Naive thymus-derived CD4-positive, alpha-beta T cell (primary cell): ENCODE measurements at regions of chrX and their contacts with region 1.

Region 1: GRCh38 chrX:41084044-41084892 is 977 bp upstream of the USP9X start:
- DNase-seq: peak; percentile 89 to 100 (median 98)
- ATAC-seq: peak; percentile 81
- H3K4me3 ChIP-seq: peak overlapping the region; percentile 97
- H3K4me3 Mint-ChIP-seq: peak overlapping the region; percentile 86 to 98 (median 94)
- H3K27ac ChIP-seq: peak overlapping the region; percentile 99
- H3K27ac Mint-ChIP-seq: peak overlapping the region; percentile 96 to 100 (median 99)
- H3K4me1 ChIP-seq: peaks cover under 1 to 7% of the 10 kb centered on the region in 2 donors
- H3K4me1 Mint-ChIP-seq: peaks cover 7 to 40% (median 17%) of the 10 kb centered on the region in 7 donors
- H3K27me3 ChIP-seq: no peaks in the 10 kb centered on the region
- H3K27me3 Mint-ChIP-seq: no peaks in the 10 kb centered on the region

Region 2: GRCh38 chrX:40169193-40170101 is 914.8 kb before region 1 on chrX:
- CTCF ChIA-PET with region 1: no interaction called
- POLR2A ChIA-PET with region 1: no interaction called
- intact Hi-C with region 1: loop called in 1 of 2 experiments (anchors 10 kb)
- DNase-seq: peak in 8 of 9 donors; percentile 65 to 81 (median 74)
- ATAC-seq: peak; percentile 79
- H3K4me3 ChIP-seq: peak overlapping the region; percentile 51
- H3K4me3 Mint-ChIP-seq: peak overlapping the region; percentile 86 to 94 (median 90)
- H3K27ac ChIP-seq: peak overlapping the region; percentile 98
- H3K27ac Mint-ChIP-seq: peak overlapping the region; percentile 96 to 99 (median 98)
- H3K4me1 ChIP-seq: peaks cover 14 to 31% of the 10 kb centered on the region in 2 donors
- H3K4me1 Mint-ChIP-seq: peaks cover 17 to 64% (median 40%) of the 10 kb centered on the region in 7 donors
- H3K27me3 ChIP-seq: no peaks in the 10 kb centered on the region
- H3K27me3 Mint-ChIP-seq: no peaks in the 10 kb centered on the region

Region 3: GRCh38 chrX:40580537-40581335 is 503.5 kb before region 1 on chrX and contains the start of gene ATP6AP2:
- CTCF ChIA-PET with region 1: no interaction called
- POLR2A ChIA-PET with region 1: no interaction called
- intact Hi-C with region 1: loop called (anchors 2 to 10 kb)
- DNase-seq: peak; percentile 60 to 91 (median 88)
- ATAC-seq: peak; percentile 96
- H3K4me3 ChIP-seq: peak within 1 kb of the TSS; percentile 81
- H3K4me3 Mint-ChIP-seq: peak within 1 kb of the TSS; percentile 92 to 98 (median 94)
- H3K27ac ChIP-seq: peak within 1 kb of the TSS; percentile 90
- H3K27ac Mint-ChIP-seq: peak within 1 kb of the TSS; percentile 87 to 96 (median 95)
- H3K4me1 ChIP-seq: peaks cover 13 to 16% of the 10 kb centered on the region in 2 donors
- H3K4me1 Mint-ChIP-seq: peaks cover 21 to 38% (median 34%) of the 10 kb centered on the region in 7 donors
- H3K27me3 ChIP-seq: no peaks in the 10 kb centered on the region
- H3K27me3 Mint-ChIP-seq: no peaks in the 10 kb centered on the region
- total RNA-seq, gene ATP6AP2: 72.0 to 98.6 (median 82.5) TPM

Region 4: GRCh38 chrX:40735325-40736169 is 348.7 kb before region 1 on chrX and contains the start of gene MED14:
- CTCF ChIA-PET with region 1: no interaction called
- POLR2A ChIA-PET with region 1: interaction called, 15 read pairs
- intact Hi-C with region 1: loop called (anchors 1 kb)
- DNase-seq: peak; percentile 74 to 97 (median 96)
- ATAC-seq: peak; percentile 94
- H3K4me3 ChIP-seq: peak within 1 kb of the TSS; percentile 95
- H3K4me3 Mint-ChIP-seq: peak within 1 kb of the TSS; percentile 87 to 99 (median 95)
- H3K27ac ChIP-seq: peak within 1 kb of the TSS; percentile 93
- H3K27ac Mint-ChIP-seq: peak within 1 kb of the TSS; percentile 96 to 100 (median 98)
- H3K4me1 ChIP-seq: peaks cover 6 to 11% of the 10 kb centered on the region in 2 donors
- H3K4me1 Mint-ChIP-seq: peaks cover 9 to 71% (median 48%) of the 10 kb centered on the region in 7 donors
- H3K27me3 ChIP-seq: no peaks in the 10 kb centered on the region
- H3K27me3 Mint-ChIP-seq: no peaks in the 10 kb centered on the region
- total RNA-seq, gene MED14: 37.9 to 49.5 (median 44.3) TPM

Region 5: GRCh38 chrX:40933132-40933705 is 151.0 kb before region 1 on chrX:
- CTCF ChIA-PET with region 1: no interaction called
- POLR2A ChIA-PET with region 1: interaction called, 4 read pairs
- intact Hi-C with region 1: loop called in 1 of 2 experiments (anchors 1 kb)
- DNase-seq: peak in 7 of 9 donors; percentile 10 to 37 (median 27)
- ATAC-seq: peak; percentile 38
- H3K4me3 ChIP-seq: peak overlapping the region; percentile 51
- H3K4me3 Mint-ChIP-seq: peak overlapping the region; percentile 79 to 91 (median 88)
- H3K27ac ChIP-seq: peak overlapping the region; percentile 59
- H3K27ac Mint-ChIP-seq: peak overlapping the region; percentile 82 to 97 (median 94)
- H3K4me1 ChIP-seq: peaks cover 0 to 10% of the 10 kb centered on the region in 2 donors
- H3K4me1 Mint-ChIP-seq: peaks cover 9 to 34% (median 22%) of the 10 kb centered on the region in 7 donors
- H3K27me3 ChIP-seq: no peaks in the 10 kb centered on the region
- H3K27me3 Mint-ChIP-seq: no peaks in the 10 kb centered on the region

Region 6: GRCh38 chrX:40996886-40997530 is 87.3 kb before region 1 on chrX:
- CTCF ChIA-PET with region 1: no interaction called
- POLR2A ChIA-PET with region 1: interaction called, 4 read pairs
- intact Hi-C with region 1: loop called in 1 of 2 experiments (anchors 5 kb)
- DNase-seq: peak in 2 of 9 donors; percentile 7 to 11
- ATAC-seq: peak; percentile 90
- H3K4me3 ChIP-seq: no peak overlapping the region
- H3K4me3 Mint-ChIP-seq: peak overlapping the region in 6 of 10 donors; percentile 33 to 68 (median 47)
- H3K27ac ChIP-seq: no peak overlapping the region
- H3K27ac Mint-ChIP-seq: no peak overlapping the region
- H3K4me1 ChIP-seq: no peaks in the 10 kb centered on the region
- H3K4me1 Mint-ChIP-seq: peaks cover 0 to 5% (median 0%) of the 10 kb centered on the region in 7 donors
- H3K27me3 ChIP-seq: no peaks in the 10 kb centered on the region
- H3K27me3 Mint-ChIP-seq: no peaks in the 10 kb centered on the region

Region 7: DNA sequence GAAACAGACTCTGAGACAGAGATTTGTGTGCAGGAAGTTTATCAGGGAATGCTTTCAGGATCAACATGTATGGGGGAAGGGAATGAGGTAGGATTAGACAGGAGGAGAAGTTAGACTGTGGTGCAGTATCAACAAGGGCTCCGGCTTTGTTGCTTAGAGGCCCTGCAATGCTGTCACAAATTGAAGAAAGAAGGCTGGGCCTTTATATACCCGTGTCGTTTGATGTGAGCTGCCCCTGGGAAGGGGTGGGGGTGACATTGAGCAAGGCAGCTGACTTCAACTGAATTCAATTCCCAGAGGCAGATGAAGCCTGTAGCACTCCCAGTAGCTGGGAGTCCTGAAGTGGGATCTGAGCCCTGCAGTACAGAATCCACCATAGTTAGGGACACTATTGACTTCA is 28.5 kb before region 1 on chrX:
- CTCF ChIA-PET with region 1: no interaction called
- POLR2A ChIA-PET with region 1: no interaction called
- intact Hi-C with region 1: no loop called
- DNase-seq: no peak
- ATAC-seq: no peak
- H3K4me3 ChIP-seq: no peak overlapping the region
- H3K4me3 Mint-ChIP-seq: no peak overlapping the region
- H3K27ac ChIP-seq: no peak overlapping the region
- H3K27ac Mint-ChIP-seq: no peak overlapping the region
- H3K4me1 ChIP-seq: no peaks in the 10 kb centered on the region
- H3K4me1 Mint-ChIP-seq: no peaks in the 10 kb centered on the region
- H3K27me3 ChIP-seq: no peaks in the 10 kb centered on the region
- H3K27me3 Mint-ChIP-seq: peaks cover 0 to 2% (median 0%) of the 10 kb centered on the region in 5 donors

Region 8: DNA sequence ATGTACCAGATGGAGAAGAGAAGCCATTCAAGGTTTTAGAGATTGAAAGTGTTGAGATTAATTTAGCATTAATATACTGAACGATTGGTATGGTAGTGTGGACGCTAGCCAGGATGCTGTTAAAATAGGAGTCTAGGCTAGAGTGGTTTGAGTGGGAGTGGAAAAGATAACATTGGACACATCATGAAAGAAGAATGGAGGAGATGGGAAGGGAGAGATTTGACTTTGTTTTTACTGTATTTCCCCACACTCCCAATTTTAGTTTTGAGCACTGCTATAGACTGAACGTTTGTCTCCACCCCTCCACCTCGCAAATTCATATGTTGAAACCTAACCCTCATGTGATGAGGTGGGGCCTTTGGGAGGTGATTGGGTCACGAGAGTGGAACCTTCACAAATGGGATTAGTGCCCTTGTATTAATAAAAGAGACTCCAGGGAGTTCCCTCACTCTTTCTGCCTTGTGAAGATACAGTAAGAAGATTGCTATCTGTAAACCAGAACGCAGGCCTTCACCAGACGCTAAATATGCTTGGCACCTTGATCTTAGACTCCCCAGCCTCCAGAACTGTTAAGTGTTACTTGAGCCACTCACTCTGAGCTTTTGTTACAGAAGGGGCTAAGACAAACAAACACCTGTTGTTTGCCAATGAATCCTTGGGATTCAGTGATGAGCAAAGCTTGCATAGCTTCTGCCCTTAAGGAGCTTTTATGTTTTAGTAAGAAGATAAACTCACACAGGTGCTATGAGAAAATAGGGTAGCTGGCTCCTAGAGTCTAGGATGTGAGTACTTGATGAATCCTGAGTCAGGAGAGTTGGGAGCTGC is 26.7 kb after region 1 on chrX:
- CTCF ChIA-PET with region 1: interaction called, 3 read pairs
- POLR2A ChIA-PET with region 1: interaction called, 42 read pairs
- intact Hi-C with region 1: loop called (anchors 1 to 2 kb)
- DNase-seq: no peak
- ATAC-seq: peak; percentile 20
- H3K4me3 ChIP-seq: no peak overlapping the region
- H3K4me3 Mint-ChIP-seq: peak overlapping the region in 7 of 10 donors; percentile 14 to 66 (median 49)
- H3K27ac ChIP-seq: peak overlapping the region; percentile 3
- H3K27ac Mint-ChIP-seq: peak overlapping the region; percentile 7 to 87 (median 69)
- H3K4me1 ChIP-seq: peaks cover 20 to 50% of the 10 kb centered on the region in 2 donors
- H3K4me1 Mint-ChIP-seq: peaks cover 34 to 85% (median 72%) of the 10 kb centered on the region in 7 donors
- H3K27me3 ChIP-seq: no peaks in the 10 kb centered on the region
- H3K27me3 Mint-ChIP-seq: no peaks in the 10 kb centered on the region